ENCODE measurements at regions of chr19 and their contacts with region 1.

Region 1: GRCh38 chr19:15251749-15252397 is 19.6 kb upstream of the EPHX3 start:
- DNase-seq: peak; percentile 14
- H3K4me3 Mint-ChIP-seq: no peak overlapping the region
- H3K27ac Mint-ChIP-seq: peak overlapping the region; percentile 64
- H3K4me1 Mint-ChIP-seq: peaks cover 14% of the 10 kb centered on the region
- H3K27me3 Mint-ChIP-seq: no peaks in the 10 kb centered on the region
- CTCF ChIP-seq: no peak

Region 2: GRCh38 chr19:15161028-15161989 is 90.6 kb before region 1 on chr19:
- CTCF ChIA-PET with region 1: no interaction called
- intact Hi-C with region 1: no loop called
- DNase-seq: peak; percentile 54
- H3K4me3 Mint-ChIP-seq: no peak overlapping the region
- H3K27ac Mint-ChIP-seq: no peak overlapping the region
- H3K4me1 Mint-ChIP-seq: no peaks in the 10 kb centered on the region
- H3K27me3 Mint-ChIP-seq: no peaks in the 10 kb centered on the region
- CTCF ChIP-seq: peak; percentile 37

Region 3: GRCh38 chr19:15177269-15178116 is 74.4 kb before region 1 on chr19:
- CTCF ChIA-PET with region 1: no interaction called
- intact Hi-C with region 1: loop called (anchors 5 kb)
- DNase-seq: peak; percentile 77
- H3K4me3 Mint-ChIP-seq: no peak overlapping the region
- H3K27ac Mint-ChIP-seq: peak overlapping the region; percentile 40
- H3K4me1 Mint-ChIP-seq: peaks cover 10% of the 10 kb centered on the region
- H3K27me3 Mint-ChIP-seq: no peaks in the 10 kb centered on the region
- CTCF ChIP-seq: peak; percentile 75

Region 4: DNA sequence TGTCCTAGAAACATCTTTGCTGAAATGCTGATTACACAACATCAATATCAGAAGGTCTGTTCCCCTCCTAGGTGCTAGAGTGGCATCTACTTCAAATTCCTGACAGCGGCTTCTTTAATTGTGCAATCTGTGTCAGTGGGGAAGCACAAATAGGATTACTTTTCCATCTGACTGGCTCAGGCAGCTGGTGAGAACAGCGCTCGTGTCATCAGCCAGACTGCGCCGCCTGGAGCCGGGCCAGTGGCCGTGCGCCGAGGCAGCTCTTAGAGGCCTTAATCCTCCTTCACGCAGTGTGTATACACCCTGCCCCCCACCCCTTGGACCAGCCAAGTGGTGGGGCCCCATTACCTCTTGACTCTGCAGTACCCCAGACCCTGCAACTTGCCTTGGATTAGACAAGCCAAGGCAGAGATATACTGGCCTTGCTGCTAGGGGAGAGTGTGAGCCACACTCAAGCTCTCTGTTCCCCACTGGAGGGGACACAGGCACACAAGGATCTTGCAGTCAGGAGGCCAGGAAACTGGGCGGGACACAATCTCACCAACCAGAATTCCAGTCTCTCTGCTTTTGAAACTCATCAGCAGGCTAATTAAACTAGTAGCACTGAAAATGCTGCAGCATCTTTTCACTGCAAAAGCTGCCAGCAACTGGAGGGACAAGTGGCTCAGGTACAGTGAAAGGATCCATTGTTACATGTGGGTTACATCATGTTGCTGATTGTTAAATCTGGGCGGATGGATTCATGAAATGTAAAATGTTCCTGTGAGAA is 29.2 kb after region 1 on chr19:
- CTCF ChIA-PET with region 1: no interaction called
- intact Hi-C with region 1: no loop called
- DNase-seq: peak; percentile 32
- H3K4me3 Mint-ChIP-seq: peak overlapping the region; percentile 49
- H3K27ac Mint-ChIP-seq: peak overlapping the region; percentile 99
- H3K4me1 Mint-ChIP-seq: peaks cover 75% of the 10 kb centered on the region
- H3K27me3 Mint-ChIP-seq: no peaks in the 10 kb centered on the region
- CTCF ChIP-seq: no peak

Measured in Calu3 (cell line).